Breast epithelium (tissue), 4 donors: ENCODE measurements at regions of chr1 and their contacts with region 1.

Region 1: GRCh38 chr1:32372149-32372756 is 9.9 kb downstream of the TSSK3 start:
- DNase-seq: no peak
- H3K4me3 ChIP-seq: no peak overlapping the region
- H3K27ac ChIP-seq: no peak overlapping the region
- H3K4me1 ChIP-seq: no peaks in the 10 kb centered on the region
- H3K27me3 ChIP-seq: no peaks in the 10 kb centered on the region
- CTCF ChIP-seq: no peak
- POLR2A ChIP-seq: no peak

Region 2: DNA sequence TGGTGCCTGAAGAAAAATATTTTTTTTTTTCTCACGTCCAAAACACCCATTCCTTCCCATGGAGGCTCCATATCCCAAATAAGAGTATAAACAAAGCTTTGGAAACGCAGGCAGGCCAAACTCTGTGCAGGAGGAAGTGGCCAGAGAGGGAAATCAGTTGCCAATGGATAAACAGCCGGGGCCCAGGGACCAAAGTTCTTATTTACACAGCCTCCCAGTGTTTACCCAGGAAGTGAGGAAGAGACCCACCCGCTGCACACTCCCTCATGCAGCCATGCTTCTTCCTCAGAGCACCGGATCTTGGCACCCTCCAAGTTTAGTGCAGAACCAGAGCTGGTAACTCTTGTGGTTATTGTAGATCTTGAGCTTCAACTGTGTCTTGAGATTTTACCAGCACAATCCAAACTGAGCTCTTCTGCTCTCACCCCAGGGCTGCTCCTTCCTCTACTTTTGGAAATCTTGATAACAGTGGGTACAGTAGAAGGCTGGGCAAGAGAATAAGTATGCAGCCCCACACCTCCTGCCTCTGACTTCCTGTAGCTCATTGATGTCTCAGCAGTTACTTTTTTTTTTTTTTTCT is 50.5 kb before region 1 on chr1:
- intact Hi-C with region 1: no loop called
- DNase-seq: no peak
- H3K4me3 ChIP-seq: no peak overlapping the region
- H3K27ac ChIP-seq: peak overlapping the region in 1 of 2 donors; percentile 8
- H3K4me1 ChIP-seq: no peaks in the 10 kb centered on the region
- H3K27me3 ChIP-seq: no peaks in the 10 kb centered on the region
- CTCF ChIP-seq: no peak
- POLR2A ChIP-seq: no peak

Region 3: DNA sequence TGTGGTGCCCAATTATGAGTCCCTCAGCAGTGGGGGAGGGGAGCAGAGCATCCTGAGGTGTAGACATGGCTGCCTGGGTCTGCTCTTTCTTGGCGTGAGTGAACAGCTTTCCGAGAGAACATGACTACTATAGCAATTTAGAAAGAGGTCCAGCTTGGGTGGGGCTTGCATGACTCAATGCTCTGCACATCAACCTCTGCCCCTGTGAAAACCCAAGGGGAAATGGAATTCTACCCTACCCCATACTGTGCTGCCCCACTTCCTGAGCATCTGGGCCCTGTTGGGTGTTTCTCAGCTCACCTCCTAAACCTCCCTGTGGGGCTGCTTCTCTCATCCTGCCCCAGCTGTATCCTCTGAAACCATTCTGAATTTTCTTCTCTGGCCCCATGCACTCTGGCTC is 700.5 kb after region 1 on chr1:
- intact Hi-C with region 1: loop called (anchors 5 kb)
- DNase-seq: no peak
- H3K4me3 ChIP-seq: no peak overlapping the region
- H3K27ac ChIP-seq: no peak overlapping the region
- H3K4me1 ChIP-seq: no peaks in the 10 kb centered on the region
- H3K27me3 ChIP-seq: no peaks in the 10 kb centered on the region
- CTCF ChIP-seq: no peak
- POLR2A ChIP-seq: no peak